ENCODE measurements at regions of chr10 and their contacts with region 1.

Region 1: GRCh38 chr10:9209105-9209798 is 1154.8 kb downstream of the GATA3 start:
- DNase-seq: peak; percentile 16
- ATAC-seq: peak; percentile 78
- H3K4me3 ChIP-seq: no peak overlapping the region
- H3K27ac ChIP-seq: no peak overlapping the region
- H3K4me1 ChIP-seq: no peaks in the 10 kb centered on the region
- H3K27me3 ChIP-seq: no peaks in the 10 kb centered on the region
- CTCF ChIP-seq: peak; percentile 82 to 87 (median 86)
- EP300 ChIP-seq: no peak
- POLR2A ChIP-seq: no peak
- RAD21 ChIP-seq: peak; percentile 87

Region 2: GRCh38 chr10:7866176-7866575 is 1343.1 kb before region 1 on chr10:
- CTCF ChIA-PET with region 1: interaction called, 26 read pairs
- POLR2A ChIA-PET with region 1: no interaction called
- RAD21 ChIA-PET with region 1: interaction called, 9 read pairs
- SMC1A ChIA-PET with region 1: interaction called, 5 read pairs
- in situ Hi-C with region 1: loop called (anchors 5 kb)
- intact Hi-C with region 1: no loop called
- DNase-seq: no peak
- ATAC-seq: no peak
- H3K4me3 ChIP-seq: no peak overlapping the region
- H3K27ac ChIP-seq: no peak overlapping the region
- H3K4me1 ChIP-seq: no peaks in the 10 kb centered on the region
- H3K27me3 ChIP-seq: no peaks in the 10 kb centered on the region
- CTCF ChIP-seq: no peak
- EP300 ChIP-seq: no peak
- POLR2A ChIP-seq: no peak
- RAD21 ChIP-seq: no peak

Region 3: DNA sequence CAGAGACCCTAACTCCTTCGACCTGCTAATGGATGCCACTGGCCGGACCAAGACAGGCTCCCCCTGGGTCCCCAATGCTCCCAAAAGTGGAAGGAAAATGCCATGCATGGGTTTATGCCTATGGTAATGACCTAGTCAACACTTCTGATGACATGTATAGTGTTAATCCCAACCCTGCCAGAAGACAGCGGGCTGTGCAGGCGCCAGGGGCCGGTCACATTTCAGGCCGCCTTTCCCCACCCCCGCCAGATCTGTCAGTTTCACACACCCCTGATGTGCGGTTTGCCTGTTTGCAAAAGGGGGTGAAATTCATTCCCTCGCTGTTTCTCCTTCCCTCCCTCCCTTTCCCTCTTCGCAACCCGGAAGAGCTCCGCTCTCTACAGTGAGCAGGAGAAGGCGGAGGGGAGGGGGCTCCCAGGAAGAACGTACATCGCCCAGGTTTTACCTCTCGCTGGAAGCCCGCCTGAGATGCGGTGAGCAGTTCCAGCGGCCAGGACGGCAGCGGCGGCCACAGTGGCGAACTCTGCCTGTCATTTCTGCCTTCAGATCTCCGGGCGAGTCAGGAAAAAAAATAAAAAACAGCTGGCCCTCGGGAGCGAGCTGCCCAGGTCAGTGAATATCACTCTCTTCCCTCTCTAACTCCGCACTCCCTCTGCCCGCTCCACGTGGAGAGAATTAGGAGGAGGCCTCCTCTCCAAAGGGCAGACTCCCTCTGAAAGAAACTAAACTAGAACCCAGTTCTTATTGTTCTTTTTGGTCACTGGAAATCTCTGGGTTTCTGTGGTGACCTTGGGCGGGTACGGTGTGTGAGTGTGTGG is 1164.1 kb before region 1 on chr10:
- CTCF ChIA-PET with region 1: no interaction called
- POLR2A ChIA-PET with region 1: no interaction called
- RAD21 ChIA-PET with region 1: no interaction called
- SMC1A ChIA-PET with region 1: interaction called, 4 read pairs
- in situ Hi-C with region 1: loop called (anchors 25 kb)
- intact Hi-C with region 1: loop called (anchors 10 kb)
- DNase-seq: no peak
- ATAC-seq: peak; percentile 20
- H3K4me3 ChIP-seq: peak overlapping the region; percentile 8; the same call in 1 of the 2 replicates
- H3K27ac ChIP-seq: no peak overlapping the region
- H3K4me1 ChIP-seq: peaks cover 11% of the 10 kb centered on the region
- H3K27me3 ChIP-seq: peaks cover 25 to 43% of the 10 kb centered on the region in 2 experiments
- CTCF ChIP-seq: no peak
- EP300 ChIP-seq: no peak
- POLR2A ChIP-seq: no peak
- RAD21 ChIP-seq: no peak

Region 4: GRCh38 chr10:9158675-9159074 is 50.6 kb before region 1 on chr10:
- CTCF ChIA-PET with region 1: no interaction called
- POLR2A ChIA-PET with region 1: no interaction called
- RAD21 ChIA-PET with region 1: no interaction called
- SMC1A ChIA-PET with region 1: no interaction called
- in situ Hi-C with region 1: no loop called
- intact Hi-C with region 1: no loop called
- DNase-seq: no peak
- ATAC-seq: no peak
- H3K4me3 ChIP-seq: no peak overlapping the region
- H3K27ac ChIP-seq: no peak overlapping the region
- H3K4me1 ChIP-seq: no peaks in the 10 kb centered on the region
- H3K27me3 ChIP-seq: no peaks in the 10 kb centered on the region
- CTCF ChIP-seq: no peak
- EP300 ChIP-seq: no peak
- POLR2A ChIP-seq: no peak
- RAD21 ChIP-seq: no peak

Region 5: DNA sequence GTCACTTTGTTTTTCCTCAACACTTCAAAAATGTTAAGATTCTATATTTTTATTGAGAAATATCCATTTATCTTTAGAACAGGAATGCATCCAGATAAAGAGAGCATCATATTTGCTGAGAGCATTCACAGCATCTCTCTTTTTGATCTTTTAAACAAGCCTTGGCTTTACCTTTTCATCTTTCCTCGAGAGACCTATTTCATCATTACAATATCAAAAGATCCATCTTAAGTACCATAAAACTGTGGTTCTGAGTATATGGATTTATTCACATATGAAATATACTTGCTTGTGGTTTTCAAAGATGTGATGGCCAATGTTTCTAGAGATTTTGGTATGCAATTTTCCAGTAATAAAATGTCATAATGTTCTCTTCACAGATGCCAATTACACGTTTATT is 13.9 kb before region 1 on chr10:
- CTCF ChIA-PET with region 1: interaction called, 10 read pairs
- POLR2A ChIA-PET with region 1: no interaction called
- RAD21 ChIA-PET with region 1: no interaction called
- SMC1A ChIA-PET with region 1: interaction called, 6 read pairs
- in situ Hi-C with region 1: no loop called
- intact Hi-C with region 1: no loop called
- DNase-seq: no peak
- ATAC-seq: no peak
- H3K4me3 ChIP-seq: no peak overlapping the region
- H3K27ac ChIP-seq: no peak overlapping the region
- H3K4me1 ChIP-seq: no peaks in the 10 kb centered on the region
- H3K27me3 ChIP-seq: no peaks in the 10 kb centered on the region
- CTCF ChIP-seq: no peak
- EP300 ChIP-seq: no peak
- POLR2A ChIP-seq: no peak
- RAD21 ChIP-seq: no peak